Calu3 (cell line): ENCODE measurements at regions of chr3 and their contacts with region 1.

Region 1: GRCh38 chr3:17013050-17013449 is 128.3 kb downstream of the PLCL2 start:
- DNase-seq: no peak
- H3K4me3 Mint-ChIP-seq: peak overlapping the region; percentile 49
- H3K27ac Mint-ChIP-seq: peak overlapping the region; percentile 37
- H3K4me1 Mint-ChIP-seq: peaks cover 44% of the 10 kb centered on the region
- H3K27me3 Mint-ChIP-seq: no peaks in the 10 kb centered on the region
- CTCF ChIP-seq: no peak

Region 2: GRCh38 chr3:16884084-16884747 is 128.8 kb before region 1 on chr3:
- CTCF ChIA-PET with region 1: interaction called, 4 read pairs
- intact Hi-C with region 1: loop called (anchors 5 kb)
- DNase-seq: peak; percentile 83
- H3K4me3 Mint-ChIP-seq: peak overlapping the region; percentile 79
- H3K27ac Mint-ChIP-seq: peak overlapping the region; percentile 31
- H3K4me1 Mint-ChIP-seq: peaks cover 15% of the 10 kb centered on the region
- H3K27me3 Mint-ChIP-seq: no peaks in the 10 kb centered on the region
- CTCF ChIP-seq: no peak

Region 3: DNA sequence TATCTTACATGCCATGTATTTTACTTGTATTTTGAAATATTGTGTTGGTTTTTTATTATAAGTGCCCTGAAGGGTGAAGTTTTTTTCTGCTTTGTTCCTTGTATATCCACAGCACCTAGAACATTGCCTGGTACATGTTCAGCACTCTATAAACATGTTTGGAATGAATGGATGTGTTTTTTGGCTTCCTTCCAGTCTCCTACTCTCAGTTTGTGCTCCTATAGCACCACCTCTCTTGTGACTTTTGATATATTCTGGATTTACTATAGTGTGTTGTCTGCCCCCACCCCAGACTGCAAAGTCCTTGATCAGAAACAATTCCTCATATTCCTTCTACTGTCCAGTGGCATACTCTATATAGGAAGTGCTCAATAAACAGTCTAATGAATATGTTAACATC is 67.7 kb before region 1 on chr3:
- CTCF ChIA-PET with region 1: no interaction called
- intact Hi-C with region 1: loop called (anchors 5 kb)
- DNase-seq: no peak
- H3K4me3 Mint-ChIP-seq: no peak overlapping the region
- H3K27ac Mint-ChIP-seq: no peak overlapping the region
- H3K4me1 Mint-ChIP-seq: peaks cover 7% of the 10 kb centered on the region
- H3K27me3 Mint-ChIP-seq: no peaks in the 10 kb centered on the region
- CTCF ChIP-seq: no peak

Region 4: DNA sequence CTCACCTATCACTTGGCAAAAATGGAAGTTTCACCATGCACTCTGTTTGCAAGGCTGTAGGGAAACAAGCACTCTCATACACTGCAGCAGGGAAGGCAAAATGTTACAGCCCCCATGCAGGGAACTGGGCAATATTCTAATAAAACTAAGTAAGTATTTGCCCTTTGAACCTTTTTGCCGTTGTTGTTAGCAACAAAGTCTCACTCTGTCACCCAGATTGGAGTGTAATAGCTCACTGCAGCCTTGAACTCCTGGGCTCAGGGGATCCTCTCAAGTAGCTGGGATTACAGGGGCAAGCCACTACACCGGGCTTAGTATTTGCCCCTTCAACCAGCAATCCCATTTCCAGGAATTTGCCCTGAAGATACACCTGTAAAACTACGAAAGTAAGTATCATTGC is 606.9 kb after region 1 on chr3:
- CTCF ChIA-PET with region 1: no interaction called
- intact Hi-C with region 1: no loop called
- DNase-seq: no peak
- H3K4me3 Mint-ChIP-seq: no peak overlapping the region
- H3K27ac Mint-ChIP-seq: no peak overlapping the region
- H3K4me1 Mint-ChIP-seq: no peaks in the 10 kb centered on the region
- H3K27me3 Mint-ChIP-seq: no peaks in the 10 kb centered on the region
- CTCF ChIP-seq: no peak